Caco-2 (cell line): ENCODE measurements at regions of chr5 and their contacts with region 1.

Region 1: GRCh38 chr5:111494364-111494999 is 17.9 kb downstream of the STARD4 start:
- DNase-seq: no peak
- H3K4me3 ChIP-seq: no peak overlapping the region
- H3K4me3 Mint-ChIP-seq: no peak overlapping the region
- H3K27ac Mint-ChIP-seq: no peak overlapping the region
- H3K4me1 ChIP-seq: 0 out of 2 replicates have a peak, but pooled peaks cover 4% of the 10 kb centered on the region
- H3K4me1 Mint-ChIP-seq: no peaks in the 10 kb centered on the region
- H3K27me3 ChIP-seq: no peaks in the 10 kb centered on the region
- H3K27me3 Mint-ChIP-seq: no peaks in the 10 kb centered on the region
- CTCF ChIP-seq: no peak

Region 2: GRCh38 chr5:110738812-110739651 is 755.5 kb before region 1 on chr5 and contains the start of gene SLC25A46:
- CTCF ChIA-PET with region 1: interaction called, 10 read pairs
- POLR2A ChIA-PET with region 1: no interaction called
- intact Hi-C with region 1: no loop called
- DNase-seq: peak; percentile 83 to 84
- H3K4me3 ChIP-seq: peak within 1 kb of the TSS; percentile 95
- H3K4me3 Mint-ChIP-seq: peak within 1 kb of the TSS; percentile 99
- H3K27ac Mint-ChIP-seq: peak within 1 kb of the TSS; percentile 97
- H3K4me1 ChIP-seq: no peaks in the 10 kb centered on the region; the same call in 1 of the 2 replicates
- H3K4me1 Mint-ChIP-seq: no peaks in the 10 kb centered on the region
- H3K27me3 ChIP-seq: no peaks in the 10 kb centered on the region
- H3K27me3 Mint-ChIP-seq: peaks cover 5% of the 10 kb centered on the region
- CTCF ChIP-seq: no peak
- total RNA-seq, gene SLC25A46: 30.6 and 34.4 TPM in 2 replicates